Mucosa of descending colon (tissue), 3 donors: ENCODE measurements at regions of chr4 and their contacts with region 1.

Region 1: GRCh38 chr4:139651282-139652194 is 14.1 kb upstream of the MGST2 start:
- DNase-seq: peak; percentile 59 to 74 (median 64)
- ATAC-seq: peak; percentile 89
- H3K4me3 ChIP-seq: no peak overlapping the region
- H3K4me1 ChIP-seq: no peaks in the 10 kb centered on the region
- CTCF ChIP-seq: peak; percentile 84

Region 2: GRCh38 chr4:139410312-139410711 is 241.2 kb before region 1 on chr4:
- intact Hi-C with region 1: no loop called
- DNase-seq: no peak
- ATAC-seq: no peak
- H3K4me3 ChIP-seq: no peak overlapping the region
- H3K4me1 ChIP-seq: no peaks in the 10 kb centered on the region
- CTCF ChIP-seq: no peak

Region 3: DNA sequence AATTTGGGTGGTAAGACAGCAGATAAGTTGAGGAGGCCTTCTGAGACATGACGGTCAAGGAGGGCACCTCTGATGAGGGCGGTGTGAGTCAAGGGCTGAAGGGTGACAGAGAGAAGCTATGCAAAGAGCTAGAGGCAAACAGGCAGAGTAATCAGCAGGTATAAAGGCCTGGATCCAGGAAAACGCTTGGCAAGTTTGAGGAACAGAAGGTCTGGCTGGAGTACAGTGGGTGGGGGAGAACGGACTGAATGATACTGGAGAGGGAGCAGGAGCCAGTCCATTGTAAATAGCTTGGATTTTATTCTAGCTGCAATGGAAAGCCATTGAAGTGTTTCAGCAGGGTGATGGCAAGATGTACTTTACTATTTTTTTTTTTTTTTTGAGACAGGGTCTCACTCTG is 158.4 kb before region 1 on chr4:
- intact Hi-C with region 1: loop called in 1 of 2 experiments (anchors 10 kb)
- DNase-seq: no peak
- ATAC-seq: no peak
- H3K4me3 ChIP-seq: no peak overlapping the region
- H3K4me1 ChIP-seq: no peaks in the 10 kb centered on the region
- CTCF ChIP-seq: no peak

Region 4: GRCh38 chr4:139603576-139604387 is 47.8 kb before region 1 on chr4:
- intact Hi-C with region 1: loop called in 1 of 2 experiments (anchors 10 kb)
- DNase-seq: peak in 1 of 3 donors; percentile 87
- ATAC-seq: peak; percentile 48
- H3K4me3 ChIP-seq: no peak overlapping the region
- H3K4me1 ChIP-seq: no peaks in the 10 kb centered on the region
- CTCF ChIP-seq: peak; percentile 40

Region 5: GRCh38 chr4:139711461-139711860 is 59.9 kb after region 1 on chr4:
- intact Hi-C with region 1: no loop called
- DNase-seq: no peak
- ATAC-seq: no peak
- H3K4me3 ChIP-seq: no peak overlapping the region
- H3K4me1 ChIP-seq: no peaks in the 10 kb centered on the region
- CTCF ChIP-seq: no peak